Panc1 (cell line): ENCODE measurements at regions of chr22 and their contacts with region 1.

Region 1: GRCh38 chr22:29772170-29772641 is 5.0 kb downstream of the UQCR10 start:
- DNase-seq: no peak
- ATAC-seq: peak; percentile 67
- H3K4me3 ChIP-seq: no peak overlapping the region
- H3K27ac ChIP-seq: no peak overlapping the region
- H3K4me1 ChIP-seq: peaks cover 4% of the 10 kb centered on the region; the same call in 1 of the 2 replicates
- H3K27me3 ChIP-seq: no peaks in the 10 kb centered on the region
- CTCF ChIP-seq: no peak; the same call in 1 of the 2 replicates

Region 2: DNA sequence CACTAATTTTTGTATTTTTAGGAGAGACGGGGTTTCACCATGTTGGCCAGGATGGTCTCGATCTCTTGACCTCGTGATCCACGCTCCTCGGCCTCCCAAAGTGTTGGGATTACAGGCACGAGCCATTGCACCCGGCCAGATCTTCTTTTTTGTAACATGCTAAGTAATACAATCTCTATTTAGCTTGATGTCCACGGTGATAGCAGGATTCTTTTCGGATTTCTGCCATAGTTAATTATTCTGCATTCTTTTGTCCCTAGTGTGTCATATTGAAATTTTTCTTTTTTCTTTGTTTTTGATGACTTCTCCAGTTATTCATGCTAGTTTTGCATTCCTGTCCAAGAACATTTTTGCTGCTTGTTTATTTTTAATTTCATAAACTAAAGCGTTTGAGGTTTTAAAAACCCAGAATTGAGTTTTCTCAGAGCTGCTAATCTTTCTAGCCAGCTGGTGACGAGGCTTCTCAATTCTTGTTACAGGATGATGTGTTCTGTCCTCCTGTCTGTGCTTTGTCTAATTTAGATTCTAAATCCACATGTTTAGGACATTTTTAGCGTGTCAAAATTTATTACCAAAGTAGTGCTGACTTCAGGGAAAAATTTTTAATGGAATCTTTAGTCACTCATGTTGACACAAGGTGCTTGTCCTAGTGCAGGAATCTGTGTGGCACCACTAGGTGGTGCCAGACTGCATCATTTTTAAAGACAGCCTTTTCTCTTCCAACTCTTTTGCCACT is 146.9 kb before region 1 on chr22:
- CTCF ChIA-PET with region 1: interaction called, 10 read pairs
- POLR2A ChIA-PET with region 1: interaction called, 7 read pairs
- in situ Hi-C with region 1: no loop called
- intact Hi-C with region 1: no loop called
- DNase-seq: no peak
- ATAC-seq: no peak
- H3K4me3 ChIP-seq: 0 out of 4 replicates have a peak overlapping the region, but pooled peaks of 1 of the 2 experiments have one; percentile 2
- H3K27ac ChIP-seq: peak overlapping the region; percentile 83
- H3K4me1 ChIP-seq: peaks cover 93% of the 10 kb centered on the region
- H3K27me3 ChIP-seq: no peaks in the 10 kb centered on the region
- CTCF ChIP-seq: peak; percentile 83

Region 3: DNA sequence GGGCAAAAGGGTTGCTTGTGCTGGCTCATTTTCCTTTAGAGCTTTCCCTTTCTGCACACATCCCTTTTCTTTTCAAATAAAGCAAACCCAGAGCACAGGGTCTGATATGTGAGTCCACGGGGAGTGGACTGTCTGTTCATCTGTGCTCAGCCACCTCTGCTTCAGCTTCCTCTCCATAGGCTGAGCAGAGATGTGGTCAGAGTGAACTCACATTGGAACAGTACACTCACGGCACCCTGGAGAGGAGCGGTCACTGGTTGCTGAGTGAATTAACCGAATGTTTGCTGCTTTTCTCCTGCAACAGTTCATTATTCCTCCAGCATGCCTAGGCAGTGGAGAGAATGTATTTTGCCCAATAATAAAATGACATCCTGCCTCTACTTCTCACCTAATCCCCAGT is 88.7 kb before region 1 on chr22:
- CTCF ChIA-PET with region 1: interaction called, 11 read pairs
- POLR2A ChIA-PET with region 1: no interaction called
- in situ Hi-C with region 1: no loop called
- intact Hi-C with region 1: no loop called
- DNase-seq: no peak
- ATAC-seq: no peak
- H3K4me3 ChIP-seq: no peak overlapping the region
- H3K27ac ChIP-seq: no peak overlapping the region
- H3K4me1 ChIP-seq: no peaks in the 10 kb centered on the region
- H3K27me3 ChIP-seq: no peaks in the 10 kb centered on the region
- CTCF ChIP-seq: no peak

Region 4: DNA sequence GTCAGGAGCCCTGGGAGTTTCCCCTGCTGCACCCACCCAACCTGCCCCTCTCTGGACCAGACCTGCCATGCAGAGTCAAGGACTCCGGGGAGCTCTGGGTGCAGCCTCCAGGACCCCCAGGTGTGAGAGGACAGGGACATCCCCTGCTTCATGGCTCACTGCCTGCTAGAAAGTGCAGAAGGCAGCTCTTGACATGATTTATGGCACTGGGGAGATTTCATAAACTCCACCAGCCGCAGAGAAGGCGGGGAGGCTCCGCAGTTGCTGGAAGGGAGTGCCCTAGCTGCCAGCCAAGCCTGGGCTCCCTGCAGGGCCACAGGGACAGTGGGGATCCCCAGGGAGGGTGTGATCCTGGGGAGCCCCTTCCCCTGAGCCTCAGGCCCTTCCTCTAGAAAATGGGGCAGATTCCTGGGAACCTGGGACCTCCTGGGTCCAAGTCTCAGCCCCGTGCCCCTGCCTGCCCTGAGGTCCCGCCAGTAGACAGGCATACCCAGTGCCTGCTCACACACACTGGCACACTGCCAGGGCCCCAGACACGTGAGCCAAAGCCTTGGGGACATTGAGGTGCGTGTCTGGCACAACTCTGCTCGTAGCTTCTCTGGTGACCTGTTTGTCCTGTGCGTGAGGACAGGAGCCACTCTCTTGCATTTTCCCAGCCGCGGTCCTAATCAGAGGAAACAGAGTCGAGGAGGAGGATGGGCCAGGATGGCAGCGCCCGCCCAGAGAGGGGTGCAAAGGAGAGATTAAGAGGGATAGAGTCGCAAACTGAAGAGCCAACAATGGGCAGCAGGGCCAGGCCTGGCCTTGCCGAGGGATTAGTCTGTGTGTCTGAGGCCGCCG is 38.6 kb before region 1 on chr22:
- CTCF ChIA-PET with region 1: interaction called, 13 read pairs
- POLR2A ChIA-PET with region 1: no interaction called
- in situ Hi-C with region 1: no loop called
- intact Hi-C with region 1: no loop called
- DNase-seq: no peak
- ATAC-seq: no peak
- H3K4me3 ChIP-seq: no peak overlapping the region
- H3K27ac ChIP-seq: no peak overlapping the region
- H3K4me1 ChIP-seq: peaks cover 2% of the 10 kb centered on the region; the same call in 1 of the 2 replicates
- H3K27me3 ChIP-seq: no peaks in the 10 kb centered on the region
- CTCF ChIP-seq: no peak

Region 5: GRCh38 chr22:29786031-29786430 is 13.8 kb after region 1 on chr22:
- CTCF ChIA-PET with region 1: interaction called, 6 read pairs
- POLR2A ChIA-PET with region 1: interaction called, 16 read pairs
- in situ Hi-C with region 1: no loop called
- intact Hi-C with region 1: no loop called
- DNase-seq: no peak
- ATAC-seq: no peak
- H3K4me3 ChIP-seq: no peak overlapping the region
- H3K27ac ChIP-seq: no peak overlapping the region
- H3K4me1 ChIP-seq: peaks cover 3% of the 10 kb centered on the region; the same call in 1 of the 2 replicates
- H3K27me3 ChIP-seq: no peaks in the 10 kb centered on the region
- CTCF ChIP-seq: no peak

Region 6: DNA sequence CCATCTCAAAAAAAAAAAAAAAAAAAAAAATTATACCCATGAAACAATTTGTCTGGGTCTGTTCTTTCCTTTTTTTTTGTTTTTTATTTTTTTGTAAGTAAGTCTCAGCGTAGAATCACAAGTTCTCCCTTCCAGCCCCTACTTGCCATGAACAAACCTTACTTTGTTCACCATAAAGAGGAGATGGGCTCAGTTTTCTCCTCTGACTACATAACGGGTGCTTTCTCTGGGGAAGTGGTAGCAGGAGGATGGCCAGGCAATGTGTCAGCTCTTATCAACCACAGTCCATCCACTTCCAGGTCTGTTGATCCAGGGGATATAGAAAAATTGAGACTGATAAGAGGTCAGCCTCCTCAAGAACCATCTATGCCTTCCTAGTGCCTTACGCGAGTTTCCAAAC is 54.9 kb after region 1 on chr22:
- CTCF ChIA-PET with region 1: no interaction called
- POLR2A ChIA-PET with region 1: no interaction called
- in situ Hi-C with region 1: no loop called
- intact Hi-C with region 1: no loop called
- DNase-seq: no peak
- ATAC-seq: no peak
- H3K4me3 ChIP-seq: no peak overlapping the region
- H3K27ac ChIP-seq: no peak overlapping the region
- H3K4me1 ChIP-seq: no peaks in the 10 kb centered on the region
- H3K27me3 ChIP-seq: no peaks in the 10 kb centered on the region
- CTCF ChIP-seq: no peak

Region 7: DNA sequence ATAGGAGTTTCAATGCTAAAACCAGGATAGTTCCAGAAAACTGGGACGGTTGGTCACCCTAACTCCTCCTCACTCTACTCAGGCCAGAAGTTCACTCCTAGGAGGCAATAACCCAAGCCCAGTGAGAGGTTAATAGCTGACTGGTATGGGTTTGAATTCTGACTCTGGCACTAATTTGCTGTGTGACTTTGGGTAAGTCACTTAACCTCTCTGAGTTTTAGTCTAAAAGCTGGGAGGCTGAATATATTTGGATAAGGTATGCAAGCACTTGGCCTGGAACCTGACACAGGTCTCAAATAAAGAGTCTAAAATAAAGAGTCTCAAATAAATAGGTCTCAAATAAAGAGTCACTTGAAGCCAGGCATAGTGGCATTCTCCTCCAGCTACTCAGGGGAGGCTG is 780.5 kb after region 1 on chr22:
- CTCF ChIA-PET with region 1: interaction called, 12 read pairs
- POLR2A ChIA-PET with region 1: no interaction called
- in situ Hi-C with region 1: no loop called
- intact Hi-C with region 1: no loop called
- DNase-seq: no peak
- ATAC-seq: no peak
- H3K4me3 ChIP-seq: no peak overlapping the region
- H3K27ac ChIP-seq: no peak overlapping the region
- H3K4me1 ChIP-seq: no peaks in the 10 kb centered on the region
- H3K27me3 ChIP-seq: no peaks in the 10 kb centered on the region
- CTCF ChIP-seq: no peak